K562 (cell line): ENCODE measurements at regions of chr7 and their contacts with region 1.

Region 1: GRCh38 chr7:74183613-74184450 is 9.7 kb downstream of the EIF4H start:
- DNase-seq: peak; percentile 43 to 57 (median 48)
- ATAC-seq: peak; percentile 80
- H3K4me3 ChIP-seq: no peak overlapping the region
- H3K27ac ChIP-seq: no peak overlapping the region
- H3K4me1 ChIP-seq: no peaks in the 10 kb centered on the region; a peak in 3 of 5 replicates
- H3K27me3 ChIP-seq: no peaks in the 10 kb centered on the region
- CTCF ChIP-seq: peak; percentile 59 to 70 (median 64)
- EP300 ChIP-seq: no peak
- POLR2A ChIP-seq: no peak
- RAD21 ChIP-seq: peak; percentile 18 to 63

Region 2: GRCh38 chr7:73894733-73895551 is 288.9 kb before region 1 on chr7:
- CTCF ChIA-PET with region 1: no interaction called
- POLR2A ChIA-PET with region 1: no interaction called
- in situ Hi-C with region 1: no loop called
- intact Hi-C with region 1: no loop called
- DNase-seq: peak in 2 of 4 experiments; percentile 39 to 46
- ATAC-seq: no peak
- H3K4me3 ChIP-seq: no peak overlapping the region
- H3K27ac ChIP-seq: no peak overlapping the region
- H3K4me1 ChIP-seq: peaks cover 8 to 29% of the 10 kb centered on the region in 2 experiments; a peak in 4 of 5 replicates
- H3K27me3 ChIP-seq: peaks cover 0 to 42% of the 10 kb centered on the region in 2 experiments; a peak in 2 of 5 replicates
- CTCF ChIP-seq: no peak
- EP300 ChIP-seq: no peak
- POLR2A ChIP-seq: no peak
- RAD21 ChIP-seq: no peak

Region 3: DNA sequence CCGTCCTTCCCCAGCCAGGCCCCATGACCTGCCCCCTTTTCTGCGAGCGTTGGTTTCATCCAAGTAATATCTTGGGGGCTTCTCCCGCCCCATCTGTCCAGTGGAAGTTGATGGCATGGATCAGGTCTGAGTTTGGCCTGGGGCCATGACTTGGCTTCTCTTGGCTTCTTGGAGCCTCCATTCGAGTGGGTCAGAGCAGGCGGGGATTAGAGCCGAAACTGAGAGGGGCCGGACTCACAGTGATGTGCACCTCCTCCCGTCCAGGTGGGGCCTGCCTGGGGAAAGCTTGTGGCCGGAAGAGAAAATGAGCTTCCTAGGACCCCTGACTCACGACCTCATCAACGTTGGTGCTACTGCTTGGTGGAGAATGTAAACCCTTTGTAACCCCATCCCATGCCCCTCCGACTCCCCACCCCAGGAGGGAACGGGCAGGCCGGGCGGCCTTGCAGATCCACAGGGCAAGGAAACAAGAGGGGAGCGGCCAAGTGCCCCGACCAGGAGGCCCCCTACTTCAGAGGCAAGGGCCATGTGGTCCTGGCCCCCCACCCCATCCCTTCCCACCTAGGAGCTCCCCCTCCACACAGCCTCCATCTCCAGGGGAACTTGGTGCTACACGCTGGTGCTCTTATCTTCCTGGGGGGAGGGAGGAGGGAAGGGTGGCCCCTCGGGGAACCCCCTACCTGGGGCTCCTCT is 115.3 kb before region 1 on chr7:
- CTCF ChIA-PET with region 1: interaction called, 11 read pairs
- POLR2A ChIA-PET with region 1: interaction called, 3 read pairs
- in situ Hi-C with region 1: no loop called
- intact Hi-C with region 1: loop called (anchors 1 kb)
- DNase-seq: peak in 2 of 4 experiments; percentile 5 to 6
- ATAC-seq: no peak
- H3K4me3 ChIP-seq: no peak overlapping the region
- H3K27ac ChIP-seq: no peak overlapping the region
- H3K4me1 ChIP-seq: peaks cover 0 to 7% of the 10 kb centered on the region in 2 experiments; a peak in 2 of 5 replicates
- H3K27me3 ChIP-seq: peaks cover 0 to 10% of the 10 kb centered on the region in 2 experiments; a peak in 1 of 5 replicates
- CTCF ChIP-seq: no peak
- EP300 ChIP-seq: no peak
- POLR2A ChIP-seq: no peak
- RAD21 ChIP-seq: no peak

Region 4: DNA sequence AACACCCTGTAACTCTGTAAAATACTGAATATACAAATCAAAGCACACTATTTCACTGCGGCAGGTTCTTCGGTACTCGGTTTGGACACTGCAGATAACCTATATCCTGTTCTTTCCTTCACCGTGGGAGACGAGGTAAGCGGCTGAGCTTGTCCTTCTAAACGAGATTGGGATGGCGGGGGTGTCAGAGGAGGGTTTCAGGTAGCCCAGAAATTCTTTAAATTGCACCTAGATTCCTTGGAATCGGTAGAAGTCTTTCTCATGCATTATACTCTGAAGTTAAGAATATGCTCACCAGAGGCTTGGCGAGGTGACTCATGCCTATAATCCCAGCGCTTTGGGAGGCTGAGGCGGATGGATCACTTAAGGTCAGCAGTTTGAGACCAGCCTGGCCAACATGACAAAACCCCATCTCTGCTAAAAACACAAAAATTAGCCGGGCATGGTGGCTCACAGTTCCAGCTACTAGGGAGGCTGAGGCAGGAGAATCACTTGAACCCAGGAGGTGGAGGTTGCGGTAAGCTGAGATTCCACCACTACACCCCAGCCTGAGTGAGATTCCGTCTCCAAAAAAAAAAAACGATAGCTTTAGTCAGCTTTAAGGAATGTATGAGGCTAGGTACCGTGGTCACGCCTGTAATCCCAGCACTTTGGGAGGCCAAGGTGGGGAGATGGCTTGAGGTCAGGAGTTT is 15.9 kb after region 1 on chr7:
- CTCF ChIA-PET with region 1: no interaction called
- POLR2A ChIA-PET with region 1: interaction called, 86 read pairs
- in situ Hi-C with region 1: no loop called
- intact Hi-C with region 1: no loop called
- DNase-seq: peak in 1 of 4 experiments; percentile 30
- ATAC-seq: no peak
- H3K4me3 ChIP-seq: no peak overlapping the region
- H3K27ac ChIP-seq: no peak overlapping the region
- H3K4me1 ChIP-seq: peaks cover 0 to under 1% of the 10 kb centered on the region in 2 experiments; a peak in 2 of 5 replicates
- H3K27me3 ChIP-seq: no peaks in the 10 kb centered on the region
- CTCF ChIP-seq: no peak
- EP300 ChIP-seq: no peak
- POLR2A ChIP-seq: no peak
- RAD21 ChIP-seq: no peak

Region 5: GRCh38 chr7:74684921-74685320 is 501.1 kb after region 1 on chr7:
- CTCF ChIA-PET with region 1: no interaction called
- POLR2A ChIA-PET with region 1: no interaction called
- in situ Hi-C with region 1: no loop called
- intact Hi-C with region 1: no loop called
- DNase-seq: no peak
- ATAC-seq: peak; percentile 57
- H3K4me3 ChIP-seq: no peak overlapping the region
- H3K27ac ChIP-seq: no peak overlapping the region
- H3K4me1 ChIP-seq: peaks cover 4 to 9% of the 10 kb centered on the region in 2 experiments; a peak in 4 of 5 replicates
- H3K27me3 ChIP-seq: no peaks in the 10 kb centered on the region
- CTCF ChIP-seq: no peak
- EP300 ChIP-seq: no peak
- POLR2A ChIP-seq: no peak
- RAD21 ChIP-seq: no peak